IMR-90 (cell line): ENCODE measurements at regions of chr2 and their contacts with region 1.

Region 1: GRCh38 chr2:234550511-234551107 is 53.7 kb upstream of the ARL4C start:
- DNase-seq: peak; percentile 86
- ATAC-seq: peak; percentile 96
- H3K4me3 ChIP-seq: no peak overlapping the region
- H3K27ac ChIP-seq: no peak overlapping the region
- H3K4me1 ChIP-seq: peaks cover 5% of the 10 kb centered on the region; the same call in 1 of the 2 replicates
- H3K27me3 ChIP-seq: no peaks in the 10 kb centered on the region; the same call in 1 of the 2 replicates
- CTCF ChIP-seq: peak; percentile 96
- POLR2A ChIP-seq: peak; percentile 47; the same call in 1 of the 2 replicates
- RAD21 ChIP-seq: peak; percentile 99

Region 2: GRCh38 chr2:234881413-234882241 is 331.0 kb after region 1 on chr2:
- CTCF ChIA-PET with region 1: no interaction called
- POLR2A ChIA-PET with region 1: no interaction called
- dilution Hi-C with region 1: no loop called
- in situ Hi-C with region 1: loop called (anchors 10 kb)
- intact Hi-C with region 1: loop called (anchors 1 kb)
- DNase-seq: peak; percentile 97
- ATAC-seq: peak; percentile 88
- H3K4me3 ChIP-seq: peak overlapping the region; percentile 12; the same call in 1 of the 2 replicates
- H3K27ac ChIP-seq: peak overlapping the region; percentile 96
- H3K4me1 ChIP-seq: peaks cover 13% of the 10 kb centered on the region
- H3K27me3 ChIP-seq: no peaks in the 10 kb centered on the region
- CTCF ChIP-seq: peak; percentile 91
- POLR2A ChIP-seq: no peak
- RAD21 ChIP-seq: peak; percentile 64

Region 3: GRCh38 chr2:235050992-235051351 is 500.4 kb after region 1 on chr2:
- CTCF ChIA-PET with region 1: no interaction called
- POLR2A ChIA-PET with region 1: no interaction called
- dilution Hi-C with region 1: no loop called
- in situ Hi-C with region 1: no loop called
- intact Hi-C with region 1: loop called (anchors 5 kb)
- DNase-seq: peak; percentile 93
- ATAC-seq: peak; percentile 89
- H3K4me3 ChIP-seq: no peak overlapping the region
- H3K27ac ChIP-seq: peak overlapping the region; percentile 49
- H3K4me1 ChIP-seq: peaks cover 20% of the 10 kb centered on the region
- H3K27me3 ChIP-seq: no peaks in the 10 kb centered on the region
- CTCF ChIP-seq: peak; percentile 25
- POLR2A ChIP-seq: peak; percentile 53
- RAD21 ChIP-seq: peak; percentile 26

Region 4: GRCh38 chr2:235116885-235117492 is 566.4 kb after region 1 on chr2:
- CTCF ChIA-PET with region 1: interaction called, 9 read pairs
- POLR2A ChIA-PET with region 1: no interaction called
- dilution Hi-C with region 1: loop called (anchors 25 kb)
- in situ Hi-C with region 1: no loop called
- intact Hi-C with region 1: loop called (anchors 1 kb)
- DNase-seq: peak; percentile 48
- ATAC-seq: peak; percentile 69
- H3K4me3 ChIP-seq: no peak overlapping the region
- H3K27ac ChIP-seq: no peak overlapping the region
- H3K4me1 ChIP-seq: no peaks in the 10 kb centered on the region
- H3K27me3 ChIP-seq: peaks cover 4% of the 10 kb centered on the region
- CTCF ChIP-seq: peak; percentile 76
- POLR2A ChIP-seq: no peak
- RAD21 ChIP-seq: peak; percentile 74

Region 5: DNA sequence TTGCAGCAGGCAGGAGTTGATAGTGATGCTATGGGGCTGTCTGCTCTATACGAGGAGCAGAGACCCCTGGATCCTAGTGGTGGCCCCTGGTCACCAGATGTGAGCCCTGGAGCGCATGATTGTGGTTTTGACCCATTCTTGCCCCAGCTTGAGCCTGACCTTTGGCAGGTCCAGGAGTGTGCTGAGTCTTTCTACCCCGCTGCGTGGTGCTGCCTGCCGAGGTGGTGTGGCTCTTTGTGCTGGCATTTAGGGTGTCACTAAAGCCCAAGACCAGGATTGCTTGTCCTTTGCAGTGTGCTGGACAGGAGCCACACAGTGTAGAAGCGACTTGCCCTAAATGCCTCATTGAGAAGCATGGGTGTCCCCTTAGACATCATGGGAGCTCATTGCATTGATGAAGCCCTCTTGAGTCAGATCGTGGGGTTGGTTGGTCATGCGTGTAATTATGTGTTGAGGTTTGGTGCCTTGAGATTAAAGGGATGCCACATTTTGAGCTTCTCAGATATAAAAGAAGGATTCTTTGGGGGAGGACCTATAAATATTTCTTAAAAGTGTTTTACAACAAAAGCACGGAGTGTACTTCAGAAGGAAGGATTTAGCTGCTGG is 1031.6 kb after region 1 on chr2:
- CTCF ChIA-PET with region 1: interaction called, 3 read pairs
- POLR2A ChIA-PET with region 1: no interaction called
- dilution Hi-C with region 1: no loop called
- in situ Hi-C with region 1: loop called (anchors 25 kb)
- intact Hi-C with region 1: loop called (anchors 5 kb)
- DNase-seq: no peak
- ATAC-seq: no peak
- H3K4me3 ChIP-seq: no peak overlapping the region
- H3K27ac ChIP-seq: no peak overlapping the region
- H3K4me1 ChIP-seq: peaks cover 5% of the 10 kb centered on the region
- H3K27me3 ChIP-seq: no peaks in the 10 kb centered on the region
- CTCF ChIP-seq: no peak
- POLR2A ChIP-seq: no peak
- RAD21 ChIP-seq: no peak